Naive thymus-derived CD4-positive, alpha-beta T cell (primary cell): ENCODE measurements at regions of chr11 and their contacts with region 1.

Region 1: GRCh38 chr11:61187505-61188130 is 15.7 kb upstream of the PGA3 start:
- DNase-seq: peak; percentile 48 to 76 (median 72)
- ATAC-seq: peak; percentile 96
- H3K4me3 ChIP-seq: no peak overlapping the region
- H3K4me3 Mint-ChIP-seq: no peak overlapping the region
- H3K27ac ChIP-seq: no peak overlapping the region
- H3K27ac Mint-ChIP-seq: peak overlapping the region in 1 of 9 donors; percentile 25
- H3K4me1 ChIP-seq: no peaks in the 10 kb centered on the region
- H3K4me1 Mint-ChIP-seq: peaks cover 0 to 5% (median 0%) of the 10 kb centered on the region in 7 donors
- H3K27me3 ChIP-seq: no peaks in the 10 kb centered on the region
- H3K27me3 Mint-ChIP-seq: peaks cover 0 to 13% (median 4%) of the 10 kb centered on the region in 5 donors

Region 2: GRCh38 chr11:60607483-60607882 is 580.1 kb before region 1 on chr11:
- CTCF ChIA-PET with region 1: no interaction called
- POLR2A ChIA-PET with region 1: no interaction called
- intact Hi-C with region 1: no loop called
- DNase-seq: no peak
- ATAC-seq: no peak
- H3K4me3 ChIP-seq: no peak overlapping the region
- H3K4me3 Mint-ChIP-seq: no peak overlapping the region
- H3K27ac ChIP-seq: no peak overlapping the region
- H3K27ac Mint-ChIP-seq: no peak overlapping the region
- H3K4me1 ChIP-seq: no peaks in the 10 kb centered on the region
- H3K4me1 Mint-ChIP-seq: peaks cover 0 to 8% (median 6%) of the 10 kb centered on the region in 7 donors
- H3K27me3 ChIP-seq: no peaks in the 10 kb centered on the region
- H3K27me3 Mint-ChIP-seq: peaks cover 10 to 31% (median 28%) of the 10 kb centered on the region in 5 donors

Region 3: GRCh38 chr11:60775420-60775961 is 412.1 kb before region 1 on chr11:
- CTCF ChIA-PET with region 1: no interaction called
- POLR2A ChIA-PET with region 1: interaction called, 3 read pairs
- intact Hi-C with region 1: loop called in 1 of 2 experiments (anchors 1 kb)
- DNase-seq: peak; percentile 62 to 90 (median 86)
- ATAC-seq: peak; percentile 99
- H3K4me3 ChIP-seq: no peak overlapping the region
- H3K4me3 Mint-ChIP-seq: peak overlapping the region in 3 of 10 donors; percentile 8 to 58 (median 48)
- H3K27ac ChIP-seq: no peak overlapping the region
- H3K27ac Mint-ChIP-seq: peak overlapping the region in 5 of 9 donors; percentile 4 to 78 (median 14)
- H3K4me1 ChIP-seq: no peaks in the 10 kb centered on the region
- H3K4me1 Mint-ChIP-seq: peaks cover 4 to 14% (median 10%) of the 10 kb centered on the region in 7 donors
- H3K27me3 ChIP-seq: no peaks in the 10 kb centered on the region
- H3K27me3 Mint-ChIP-seq: peaks cover 0 to 6% (median 0%) of the 10 kb centered on the region in 5 donors

Region 4: DNA sequence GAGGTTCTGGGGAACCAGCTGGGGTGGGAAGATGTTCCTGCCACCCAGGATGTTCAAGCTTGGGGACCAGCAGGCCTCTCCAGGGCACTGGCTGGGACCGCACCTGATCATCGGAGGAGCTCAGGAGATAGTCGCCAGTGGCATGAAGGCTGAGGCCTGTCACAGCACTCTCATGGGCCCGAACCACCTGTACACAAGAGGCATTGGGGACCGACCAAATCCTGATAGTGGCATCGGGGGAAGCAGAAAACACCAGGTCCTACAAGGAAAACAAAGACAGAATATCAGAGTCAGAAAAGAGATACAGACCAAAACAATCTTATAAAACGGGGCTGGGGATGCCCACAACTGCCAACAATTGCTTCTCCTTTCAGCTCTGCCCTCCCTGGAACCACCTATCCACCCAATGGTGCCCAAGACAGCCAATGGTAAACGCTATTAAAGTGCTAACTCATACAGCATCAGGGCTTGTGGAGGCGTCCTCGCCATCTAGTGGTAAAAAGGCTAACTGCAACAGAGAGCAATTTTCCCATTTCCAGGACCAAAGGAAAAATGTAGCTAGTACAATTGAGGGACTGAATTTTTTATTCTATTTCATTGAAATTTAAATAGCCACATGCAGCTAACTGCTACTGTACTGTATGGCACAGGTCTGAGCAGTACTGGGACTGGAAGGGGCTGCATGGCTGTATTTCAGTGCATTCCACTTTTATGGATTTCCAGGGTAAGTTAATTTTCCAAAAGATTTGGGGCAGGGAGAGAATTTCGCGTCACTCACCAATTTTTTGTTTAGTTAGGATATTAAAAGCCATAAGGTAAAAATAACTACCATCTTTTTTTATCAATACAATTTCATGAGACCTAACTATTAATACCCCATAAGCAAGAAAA is 288.3 kb before region 1 on chr11:
- CTCF ChIA-PET with region 1: no interaction called
- POLR2A ChIA-PET with region 1: no interaction called
- intact Hi-C with region 1: loop called in 1 of 2 experiments (anchors 2 kb)
- DNase-seq: peak in 7 of 9 donors; percentile 11 to 56 (median 37)
- ATAC-seq: peak; percentile 95
- H3K4me3 ChIP-seq: no peak overlapping the region
- H3K4me3 Mint-ChIP-seq: no peak overlapping the region
- H3K27ac ChIP-seq: no peak overlapping the region
- H3K27ac Mint-ChIP-seq: peak overlapping the region in 3 of 9 donors; percentile 16 to 51 (median 38)
- H3K4me1 ChIP-seq: peaks cover 0 to 3% of the 10 kb centered on the region in 2 donors
- H3K4me1 Mint-ChIP-seq: peaks cover 10 to 25% (median 20%) of the 10 kb centered on the region in 7 donors
- H3K27me3 ChIP-seq: no peaks in the 10 kb centered on the region
- H3K27me3 Mint-ChIP-seq: no peaks in the 10 kb centered on the region

Region 5: DNA sequence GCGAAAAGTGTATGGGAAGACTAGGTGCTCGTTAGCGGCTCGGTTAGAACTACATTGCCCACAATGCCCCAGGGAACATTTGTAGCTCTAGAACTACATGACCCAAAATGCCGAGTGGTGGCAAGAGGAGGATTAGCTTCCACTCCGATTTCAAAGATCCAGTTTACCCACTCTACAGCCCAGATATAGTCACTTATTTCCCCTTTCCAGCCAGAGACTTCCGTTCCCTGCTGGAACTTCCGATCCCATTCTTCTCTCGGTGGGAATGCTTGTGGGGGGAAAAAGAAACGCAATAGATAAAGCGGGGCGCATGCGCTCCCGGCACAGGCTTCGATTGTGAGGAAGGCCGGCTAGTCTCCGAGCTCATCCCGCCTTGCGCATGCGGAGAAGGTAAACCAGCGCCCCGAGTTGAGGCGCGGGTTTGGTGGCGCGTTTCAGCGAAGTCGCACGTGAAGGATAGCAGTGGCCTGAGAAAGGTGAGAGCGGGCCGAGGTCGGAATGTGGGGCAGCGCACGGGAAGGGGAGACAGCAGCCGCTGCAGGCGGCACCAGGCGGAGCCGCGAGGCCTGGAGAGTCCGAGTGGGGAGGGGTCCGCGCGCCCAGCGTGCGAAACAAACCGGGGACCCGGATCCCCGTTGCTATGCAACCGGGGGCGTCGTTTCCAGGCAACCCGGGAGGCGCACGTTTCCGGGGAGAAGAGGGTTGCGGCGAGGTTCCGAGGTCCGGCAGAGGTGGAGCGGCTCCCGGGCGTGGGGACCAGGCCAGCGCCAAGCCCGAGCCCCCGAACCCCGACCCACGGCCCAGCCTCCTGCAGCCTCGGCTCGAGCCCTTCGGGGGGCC is 273.6 kb before region 1 on chr11 and contains the start of gene TMEM109:
- CTCF ChIA-PET with region 1: interaction called, 3 read pairs
- POLR2A ChIA-PET with region 1: interaction called, 3 read pairs
- intact Hi-C with region 1: loop called (anchors 1 kb)
- DNase-seq: peak; percentile 77 to 93 (median 91)
- ATAC-seq: peak; percentile 76
- H3K4me3 ChIP-seq: peak within 1 kb of the TSS; percentile 94
- H3K4me3 Mint-ChIP-seq: peak within 1 kb of the TSS; percentile 91 to 99 (median 98)
- H3K27ac ChIP-seq: peak within 1 kb of the TSS; percentile 94
- H3K27ac Mint-ChIP-seq: peak within 1 kb of the TSS; percentile 91 to 99 (median 97)
- H3K4me1 ChIP-seq: peaks cover 43 to 45% of the 10 kb centered on the region in 2 donors
- H3K4me1 Mint-ChIP-seq: peaks cover 39 to 77% (median 60%) of the 10 kb centered on the region in 7 donors
- H3K27me3 ChIP-seq: no peaks in the 10 kb centered on the region
- H3K27me3 Mint-ChIP-seq: peaks cover 0 to 11% (median 0%) of the 10 kb centered on the region in 5 donors
- total RNA-seq, gene TMEM109: 49.8 to 99.8 (median 56.9) TPM

Region 6: DNA sequence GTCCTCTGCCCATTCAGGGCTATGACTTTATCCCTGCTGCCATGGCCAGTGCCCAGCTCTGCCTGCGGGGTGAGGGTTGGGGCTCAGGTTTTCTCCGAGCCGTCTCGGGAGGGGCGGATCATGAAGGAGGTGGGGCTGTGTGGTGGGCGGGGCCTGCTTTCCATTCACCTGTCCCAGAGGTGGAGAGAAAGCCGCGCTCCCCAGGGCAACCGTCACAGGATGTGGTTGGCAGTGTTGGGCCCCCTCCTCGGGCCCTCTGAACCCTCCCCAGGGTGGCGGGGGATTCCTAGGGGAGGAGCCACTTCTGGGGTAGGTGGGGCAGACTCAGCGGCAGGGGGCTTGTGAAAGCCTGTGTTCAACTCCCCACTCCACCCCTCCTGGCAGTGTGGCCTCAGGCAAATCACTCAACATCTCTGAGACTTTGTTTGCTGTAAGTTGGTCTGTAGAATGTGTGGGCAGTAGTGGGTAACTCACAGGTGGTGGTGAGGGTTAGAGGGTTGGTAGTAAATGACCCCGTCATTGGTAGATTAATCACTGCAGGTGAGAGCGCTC is 165.9 kb before region 1 on chr11:
- CTCF ChIA-PET with region 1: interaction called, 3 read pairs
- POLR2A ChIA-PET with region 1: no interaction called
- intact Hi-C with region 1: loop called (anchors 5 kb)
- DNase-seq: peak; percentile 72 to 98 (median 96)
- ATAC-seq: peak; percentile 91
- H3K4me3 ChIP-seq: peak overlapping the region; percentile 53
- H3K4me3 Mint-ChIP-seq: peak overlapping the region; percentile 68 to 90 (median 81)
- H3K27ac ChIP-seq: peak overlapping the region; percentile 82
- H3K27ac Mint-ChIP-seq: peak overlapping the region; percentile 88 to 100 (median 98)
- H3K4me1 ChIP-seq: peaks cover 49 to 56% of the 10 kb centered on the region in 2 donors
- H3K4me1 Mint-ChIP-seq: peaks cover 40 to 79% (median 76%) of the 10 kb centered on the region in 7 donors
- H3K27me3 ChIP-seq: no peaks in the 10 kb centered on the region
- H3K27me3 Mint-ChIP-seq: no peaks in the 10 kb centered on the region

Region 7: GRCh38 chr11:61161190-61162091 is 26.2 kb before region 1 on chr11 and contains the start of gene VPS37C:
- CTCF ChIA-PET with region 1: interaction called, 4 read pairs
- POLR2A ChIA-PET with region 1: interaction called, 3 read pairs
- intact Hi-C with region 1: loop called (anchors 1 kb)
- DNase-seq: peak; percentile 80 to 99 (median 87)
- ATAC-seq: peak; percentile 83
- H3K4me3 ChIP-seq: peak within 1 kb of the TSS; percentile 74
- H3K4me3 Mint-ChIP-seq: peak within 1 kb of the TSS; percentile 85 to 96 (median 90)
- H3K27ac ChIP-seq: peak within 1 kb of the TSS; percentile 78
- H3K27ac Mint-ChIP-seq: peak within 1 kb of the TSS; percentile 84 to 96 (median 94)
- H3K4me1 ChIP-seq: peaks cover 7 to 14% of the 10 kb centered on the region in 2 donors
- H3K4me1 Mint-ChIP-seq: peaks cover 31 to 62% (median 48%) of the 10 kb centered on the region in 7 donors
- H3K27me3 ChIP-seq: no peaks in the 10 kb centered on the region
- H3K27me3 Mint-ChIP-seq: no peaks in the 10 kb centered on the region
- total RNA-seq, gene VPS37C: 4.1 to 12.0 (median 7.9) TPM